Activated naive CD4-positive, alpha-beta T cell treated with anti-CD3 and anti-CD28 coated beads, Interleukin-2, amount 10 ng/mL, durations not matched to agents 7 days and 5 days (primary cell): ENCODE measurements at regions of chr2 and their contacts with region 1.

Region 1: GRCh38 chr2:118855451-118856279 is 8.2 kb upstream of the EN1 start:
- DNase-seq: peak; percentile 84
- H3K4me3 Mint-ChIP-seq: peak overlapping the region; percentile 33
- H3K27ac Mint-ChIP-seq: peak overlapping the region; percentile 28
- H3K4me1 Mint-ChIP-seq: peaks cover 10% of the 10 kb centered on the region
- H3K27me3 Mint-ChIP-seq: peaks cover 100% of the 10 kb centered on the region

Region 2: DNA sequence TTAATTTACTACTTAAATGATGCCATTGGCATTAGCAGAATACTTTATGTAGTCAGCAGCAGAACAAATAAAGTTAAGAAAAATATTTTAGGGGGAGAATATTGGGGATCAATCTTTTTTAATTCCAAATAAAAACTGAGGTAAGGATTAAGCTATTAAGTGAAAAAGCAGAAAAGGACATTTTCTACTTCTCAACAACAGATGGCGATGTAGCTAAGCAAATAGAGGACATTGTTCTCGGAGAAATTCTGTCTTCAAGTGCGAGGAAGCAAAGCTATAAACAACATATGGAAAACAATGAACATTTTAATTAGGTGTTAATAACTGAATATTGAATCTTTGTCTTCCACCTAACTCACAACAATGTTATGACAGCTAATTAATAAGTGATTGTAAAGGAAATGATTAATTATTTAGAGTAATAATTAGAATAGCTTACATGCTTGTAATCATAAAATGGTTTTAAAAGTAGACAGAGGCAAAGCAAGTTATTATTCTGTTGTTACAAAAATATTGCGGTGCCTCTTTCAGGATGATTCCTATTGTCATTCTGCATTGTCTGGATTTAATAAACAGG is 808.9 kb before region 1 on chr2:
- CTCF ChIA-PET with region 1: interaction called, 10 read pairs
- DNase-seq: no peak
- H3K4me3 Mint-ChIP-seq: no peak overlapping the region
- H3K27ac Mint-ChIP-seq: no peak overlapping the region
- H3K4me1 Mint-ChIP-seq: no peaks in the 10 kb centered on the region
- H3K27me3 Mint-ChIP-seq: peaks cover 34% of the 10 kb centered on the region

Region 3: GRCh38 chr2:118221666-118222594 is 633.7 kb before region 1 on chr2:
- CTCF ChIA-PET with region 1: interaction called, 11 read pairs
- DNase-seq: peak; percentile 42
- H3K4me3 Mint-ChIP-seq: no peak overlapping the region
- H3K27ac Mint-ChIP-seq: no peak overlapping the region
- H3K4me1 Mint-ChIP-seq: peaks cover 24% of the 10 kb centered on the region
- H3K27me3 Mint-ChIP-seq: peaks cover 68% of the 10 kb centered on the region

Region 4: GRCh38 chr2:118686369-118686768 is 169.3 kb before region 1 on chr2:
- CTCF ChIA-PET with region 1: no interaction called
- DNase-seq: no peak
- H3K4me3 Mint-ChIP-seq: no peak overlapping the region
- H3K27ac Mint-ChIP-seq: no peak overlapping the region
- H3K4me1 Mint-ChIP-seq: no peaks in the 10 kb centered on the region
- H3K27me3 Mint-ChIP-seq: no peaks in the 10 kb centered on the region

Region 5: GRCh38 chr2:118842661-118843482 is 12.8 kb before region 1 on chr2:
- CTCF ChIA-PET with region 1: interaction called, 10 read pairs
- DNase-seq: no peak
- H3K4me3 Mint-ChIP-seq: no peak overlapping the region
- H3K27ac Mint-ChIP-seq: no peak overlapping the region
- H3K4me1 Mint-ChIP-seq: peaks cover 13% of the 10 kb centered on the region
- H3K27me3 Mint-ChIP-seq: peaks cover 100% of the 10 kb centered on the region

Region 6: DNA sequence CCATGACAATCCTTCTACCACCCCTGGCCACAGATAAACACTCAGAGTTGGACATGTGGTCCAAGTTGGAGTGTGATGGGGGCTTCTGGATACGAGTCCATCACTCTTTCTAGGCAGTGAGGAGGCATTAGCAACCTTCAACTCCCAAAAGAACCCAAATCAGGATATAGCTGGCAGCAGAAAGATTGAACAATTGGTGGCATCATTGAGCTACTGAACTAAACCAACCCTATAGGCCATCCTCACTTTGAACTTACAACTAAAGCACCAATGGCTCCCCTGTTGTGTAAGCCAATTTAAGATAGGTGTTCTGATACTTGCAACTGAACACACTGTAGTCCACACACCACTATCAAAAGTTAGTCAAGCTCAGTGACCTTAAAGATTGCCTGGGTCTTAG is 62.4 kb after region 1 on chr2:
- CTCF ChIA-PET with region 1: no interaction called
- DNase-seq: no peak
- H3K4me3 Mint-ChIP-seq: no peak overlapping the region
- H3K27ac Mint-ChIP-seq: no peak overlapping the region
- H3K4me1 Mint-ChIP-seq: no peaks in the 10 kb centered on the region
- H3K27me3 Mint-ChIP-seq: no peaks in the 10 kb centered on the region